ENCODE measurements at regions of chr12 and their contacts with region 1.

Region 1: GRCh38 chr12:25447046-25447445 is 106.0 kb downstream of the LMNTD1 start:
- DNase-seq: no peak
- H3K4me3 ChIP-seq: no peak overlapping the region
- H3K27ac ChIP-seq: no peak overlapping the region
- H3K4me1 ChIP-seq: no peaks in the 10 kb centered on the region
- H3K27me3 ChIP-seq: no peaks in the 10 kb centered on the region
- CTCF ChIP-seq: no peak

Region 2: DNA sequence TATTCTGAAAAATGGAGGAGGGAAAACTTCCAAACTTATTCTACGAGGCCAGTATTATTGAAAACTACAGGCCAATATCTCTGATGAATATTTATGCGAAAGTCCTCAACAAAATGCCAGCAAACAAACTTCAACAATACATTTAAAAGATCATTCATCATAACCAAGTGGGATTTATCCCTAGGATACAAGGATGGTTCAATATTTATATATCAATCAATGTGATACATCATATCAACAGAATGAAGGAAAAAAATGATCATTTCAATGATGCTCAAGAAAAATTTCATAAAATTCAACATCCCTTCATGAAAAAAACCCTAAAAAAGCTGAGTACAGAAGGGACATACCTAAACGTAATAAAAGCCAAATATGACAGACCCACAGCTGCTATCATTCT is 151.9 kb after region 1 on chr12:
- intact Hi-C with region 1: no loop called
- DNase-seq: no peak
- H3K4me3 ChIP-seq: no peak overlapping the region
- H3K27ac ChIP-seq: no peak overlapping the region
- H3K4me1 ChIP-seq: no peaks in the 10 kb centered on the region
- H3K27me3 ChIP-seq: no peaks in the 10 kb centered on the region
- CTCF ChIP-seq: no peak

Region 3: DNA sequence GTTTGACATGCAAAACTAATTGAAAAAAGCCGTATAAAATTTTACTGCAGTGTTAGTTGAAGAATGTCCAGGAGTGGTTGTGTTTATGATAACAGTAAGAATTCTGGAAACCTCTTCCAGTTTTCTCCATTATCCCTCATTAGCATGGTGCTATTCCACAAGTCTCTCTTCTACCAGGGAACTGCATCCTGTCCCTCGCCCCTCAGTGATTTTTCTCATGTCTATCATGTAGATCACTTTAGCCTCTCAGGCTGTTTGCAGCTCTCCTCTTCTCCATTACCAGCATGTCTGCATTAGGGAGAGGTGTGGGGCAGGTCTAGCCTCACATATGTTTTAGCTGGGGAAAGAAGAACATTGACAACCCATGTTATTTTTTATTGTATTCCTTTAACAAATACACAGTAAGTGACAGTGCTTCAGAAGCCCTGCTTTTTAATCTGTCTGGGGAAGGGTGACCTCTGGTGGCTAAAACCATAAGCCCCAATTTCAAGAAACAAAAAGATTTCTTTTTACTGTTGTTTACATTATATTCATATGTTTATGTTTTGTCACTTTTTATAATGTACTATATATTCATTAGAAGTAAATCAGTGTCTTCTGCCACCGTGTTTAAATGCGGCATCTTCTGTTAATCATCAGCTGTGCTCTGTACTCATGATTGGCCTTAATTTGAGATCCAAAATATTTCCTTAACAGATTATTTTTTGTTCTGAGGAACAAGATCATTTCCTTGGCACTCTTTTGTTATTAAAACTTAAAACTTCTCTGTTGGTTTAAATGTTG is 582.1 kb after region 1 on chr12:
- intact Hi-C with region 1: loop called (anchors 10 kb)
- DNase-seq: peak in 3 of 5 donors; percentile 32 to 62 (median 56)
- H3K4me3 ChIP-seq: peak overlapping the region in 2 of 3 donors; percentile 28 to 42
- H3K27ac ChIP-seq: no peak overlapping the region
- H3K4me1 ChIP-seq: peaks cover 0 to 10% (median 6%) of the 10 kb centered on the region in 3 donors
- H3K27me3 ChIP-seq: no peaks in the 10 kb centered on the region
- CTCF ChIP-seq: peak; percentile 52

Region 4: DNA sequence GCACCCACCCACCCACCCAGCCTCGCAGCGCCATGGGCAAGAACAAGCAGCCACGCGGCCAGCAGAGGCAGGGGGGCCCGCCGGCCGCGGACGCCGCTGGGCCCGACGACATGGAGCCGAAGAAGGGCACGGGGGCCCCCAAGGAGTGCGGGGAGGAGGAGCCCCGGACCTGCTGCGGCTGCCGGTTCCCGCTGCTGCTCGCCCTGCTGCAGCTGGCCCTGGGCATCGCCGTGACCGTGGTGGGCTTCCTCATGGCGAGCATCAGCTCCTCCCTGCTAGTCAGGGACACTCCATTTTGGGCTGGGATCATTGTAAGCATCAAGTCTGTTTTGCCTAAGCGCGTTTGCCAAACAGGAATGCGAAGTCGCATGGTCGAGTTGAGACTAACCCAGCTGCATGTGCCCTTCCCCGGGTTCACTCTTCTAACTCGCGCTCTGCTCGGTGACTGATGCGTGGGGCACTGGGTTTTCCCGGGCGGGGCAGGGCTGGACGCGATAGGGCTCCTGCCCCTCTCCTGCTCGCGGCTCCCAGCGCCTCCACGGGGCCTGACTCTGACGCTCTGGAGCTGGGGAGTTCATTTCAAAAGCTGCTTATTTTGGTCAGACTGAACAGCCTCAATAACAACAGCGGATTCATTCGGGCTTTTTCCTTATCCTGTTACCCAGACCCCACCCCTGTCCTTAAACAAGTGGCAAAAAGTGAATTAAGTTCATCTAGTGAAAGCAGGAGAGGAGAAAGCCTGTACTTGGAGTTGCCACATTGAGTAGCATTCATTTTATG is 748.8 kb after region 1 on chr12:
- intact Hi-C with region 1: no loop called
- DNase-seq: peak; percentile 12 to 85 (median 76)
- H3K4me3 ChIP-seq: peak overlapping the region; percentile 80 to 94 (median 89)
- H3K27ac ChIP-seq: peak overlapping the region; percentile 80 to 81
- H3K4me1 ChIP-seq: peaks cover 0 to 7% (median 3%) of the 10 kb centered on the region in 3 donors
- H3K27me3 ChIP-seq: no peaks in the 10 kb centered on the region
- CTCF ChIP-seq: no peak